Motor neuron (in vitro differentiated cells): ENCODE measurements at regions of chr2 and their contacts with region 1.

Region 1: GRCh38 chr2:46650556-46651001 is 171.2 kb downstream of the TMEM247 start:
- ATAC-seq: peak; percentile 60 to 80 (median 72)
- H3K4me3 ChIP-seq: no peak overlapping the region
- H3K27ac ChIP-seq: no peak overlapping the region
- H3K4me1 ChIP-seq: peaks cover 0 to 2% of the 10 kb centered on the region in 2 donors

Region 2: DNA sequence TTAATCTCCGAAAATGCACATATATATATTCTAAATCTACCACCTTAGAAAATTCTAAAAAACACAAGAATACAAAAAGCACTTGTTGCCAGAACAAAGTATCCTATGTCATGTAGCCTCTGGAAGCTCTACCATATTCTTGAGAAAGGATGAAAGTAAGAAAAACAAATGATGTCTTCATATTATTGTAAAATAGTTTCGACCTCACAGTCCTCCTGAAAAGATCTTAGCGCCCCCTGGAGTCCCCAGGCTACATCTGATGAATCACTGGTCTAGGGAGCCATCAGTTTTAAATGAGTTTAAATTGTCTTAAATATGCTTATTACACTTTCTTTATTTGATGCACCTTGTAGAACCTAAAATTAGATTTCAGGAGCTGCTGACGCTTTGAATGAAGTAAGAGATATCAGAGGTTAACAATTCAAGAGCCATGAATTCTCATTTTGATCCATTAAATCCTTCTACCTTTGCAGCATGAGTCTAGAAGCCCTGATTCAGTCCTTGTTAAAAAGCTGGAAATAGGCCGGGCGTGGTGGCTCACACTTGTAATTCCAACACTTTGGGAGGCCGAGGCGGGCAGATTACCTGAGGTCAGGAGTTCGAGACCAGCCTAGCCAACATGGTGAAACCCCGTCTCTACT is 126.2 kb after region 1 on chr2:
- in situ Hi-C with region 1: loop called in 1 of 9 experiments (anchors 10 kb)
- ATAC-seq: peak in 3 of 8 experiments; percentile 72 to 84 (median 78)
- H3K4me3 ChIP-seq: no peak overlapping the region
- H3K27ac ChIP-seq: no peak overlapping the region
- H3K4me1 ChIP-seq: peaks cover 17 to 22% of the 10 kb centered on the region in 2 donors